Endothelial cell of umbilical vein (primary cell): ENCODE measurements at regions of chr6 and their contacts with region 1.

Region 1: DNA sequence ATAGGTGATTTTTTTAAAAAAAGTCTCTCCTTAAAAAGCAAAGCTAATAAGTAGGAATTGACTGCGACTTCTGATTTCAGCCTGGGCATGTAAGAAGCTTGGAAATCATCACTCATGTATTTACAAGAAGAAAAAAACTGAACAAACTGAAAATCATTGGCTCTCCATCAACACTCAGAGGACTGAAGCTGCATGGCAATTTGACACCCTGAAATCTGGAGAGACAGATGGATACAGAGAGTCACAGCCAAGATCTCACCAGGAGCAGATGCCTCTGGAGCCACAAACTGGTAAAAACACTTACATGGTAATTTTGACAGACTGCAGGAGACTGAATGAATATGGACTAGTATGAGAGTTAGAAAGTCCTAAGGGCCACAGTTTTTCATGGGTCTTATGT is 191.2 kb upstream of the TCF21 start:
- DNase-seq: no peak
- H3K4me3 ChIP-seq: no peak overlapping the region
- H3K27ac ChIP-seq: no peak overlapping the region
- H3K4me1 ChIP-seq: no peaks in the 10 kb centered on the region
- H3K27me3 ChIP-seq: no peaks in the 10 kb centered on the region
- CTCF ChIP-seq: no peak
- POLR2A ChIP-seq: no peak

Region 2: GRCh38 chr6:133553652-133554051 is 144.0 kb before region 1 on chr6:
- CTCF ChIA-PET with region 1: no interaction called
- POLR2A ChIA-PET with region 1: no interaction called
- dilution Hi-C with region 1: no loop called
- intact Hi-C with region 1: no loop called
- DNase-seq: peak; percentile 44
- H3K4me3 ChIP-seq: no peak overlapping the region
- H3K27ac ChIP-seq: no peak overlapping the region
- H3K4me1 ChIP-seq: no peaks in the 10 kb centered on the region
- H3K27me3 ChIP-seq: peaks cover 2 to 4% of the 10 kb centered on the region in 2 experiments
- CTCF ChIP-seq: peak; percentile 23 to 37
- POLR2A ChIP-seq: no peak

Region 3: DNA sequence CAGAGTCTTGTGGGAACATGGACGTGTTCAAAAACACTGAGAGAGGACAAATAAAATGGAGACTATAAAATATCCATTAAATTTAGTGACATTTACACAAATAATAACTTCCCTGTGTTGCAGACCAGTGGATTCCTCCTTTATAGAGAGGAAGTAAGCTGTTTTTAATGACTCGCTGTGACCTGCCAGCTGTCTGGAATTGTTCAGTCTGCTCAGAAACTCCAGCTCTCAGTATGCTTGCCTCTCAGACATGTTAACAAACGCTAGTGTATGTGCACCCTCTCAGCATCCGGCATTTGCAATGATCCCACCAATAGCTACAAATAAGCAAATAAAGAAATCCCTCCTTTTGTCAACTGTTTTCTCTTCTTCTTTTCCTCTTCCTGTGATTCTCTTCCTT is 33.2 kb after region 1 on chr6:
- CTCF ChIA-PET with region 1: no interaction called
- POLR2A ChIA-PET with region 1: no interaction called
- dilution Hi-C with region 1: no loop called
- intact Hi-C with region 1: loop called (anchors 2 kb)
- DNase-seq: no peak
- H3K4me3 ChIP-seq: no peak overlapping the region
- H3K27ac ChIP-seq: no peak overlapping the region
- H3K4me1 ChIP-seq: no peaks in the 10 kb centered on the region
- H3K27me3 ChIP-seq: no peaks in the 10 kb centered on the region
- CTCF ChIP-seq: no peak
- POLR2A ChIP-seq: no peak

Region 4: DNA sequence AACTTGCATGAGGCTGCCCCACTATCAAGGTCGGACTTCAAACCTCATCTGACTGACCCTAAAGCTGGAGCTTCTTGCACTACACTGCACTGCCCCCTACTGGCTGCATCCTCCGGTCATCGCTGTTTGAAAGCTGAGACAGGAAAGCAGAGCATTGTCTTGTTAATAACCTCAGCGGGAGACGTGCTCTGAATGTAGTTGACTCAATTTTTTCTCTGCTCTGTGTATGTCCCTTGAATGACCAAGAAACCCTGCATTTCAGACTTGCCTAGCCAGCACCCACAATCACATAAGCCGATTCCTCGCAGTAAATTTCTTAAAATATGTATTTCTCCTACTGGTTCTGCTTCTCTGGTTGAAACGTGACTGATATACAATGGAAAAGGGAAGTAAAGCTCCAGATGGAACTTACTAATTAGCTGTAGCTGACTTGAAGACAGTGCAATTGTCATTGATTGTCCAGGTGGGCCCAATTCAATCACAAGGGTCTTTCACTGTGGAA is 219.0 kb after region 1 on chr6:
- CTCF ChIA-PET with region 1: no interaction called
- POLR2A ChIA-PET with region 1: no interaction called
- dilution Hi-C with region 1: no loop called
- intact Hi-C with region 1: no loop called
- DNase-seq: peak; percentile 83
- H3K4me3 ChIP-seq: no peak overlapping the region
- H3K27ac ChIP-seq: no peak overlapping the region
- H3K4me1 ChIP-seq: no peaks in the 10 kb centered on the region
- H3K27me3 ChIP-seq: peaks cover 9 to 37% of the 10 kb centered on the region in 2 experiments
- CTCF ChIP-seq: peak; percentile 89 to 90
- POLR2A ChIP-seq: no peak

Region 5: GRCh38 chr6:134111062-134111677 is 413.5 kb after region 1 on chr6:
- CTCF ChIA-PET with region 1: no interaction called
- POLR2A ChIA-PET with region 1: no interaction called
- dilution Hi-C with region 1: no loop called
- intact Hi-C with region 1: no loop called
- DNase-seq: peak; percentile 59
- H3K4me3 ChIP-seq: no peak overlapping the region
- H3K27ac ChIP-seq: no peak overlapping the region
- H3K4me1 ChIP-seq: no peaks in the 10 kb centered on the region
- H3K27me3 ChIP-seq: peaks cover 3 to 6% of the 10 kb centered on the region in 2 experiments
- CTCF ChIP-seq: peak; percentile 81 to 85
- POLR2A ChIP-seq: no peak